ENCODE measurements at regions of chr1 and their contacts with region 1.

Region 1: GRCh38 chr1:182391362-182392044 is at the start of gene GLUL:
- DNase-seq: peak; percentile 86 to 99 (median 92)

Region 2: DNA sequence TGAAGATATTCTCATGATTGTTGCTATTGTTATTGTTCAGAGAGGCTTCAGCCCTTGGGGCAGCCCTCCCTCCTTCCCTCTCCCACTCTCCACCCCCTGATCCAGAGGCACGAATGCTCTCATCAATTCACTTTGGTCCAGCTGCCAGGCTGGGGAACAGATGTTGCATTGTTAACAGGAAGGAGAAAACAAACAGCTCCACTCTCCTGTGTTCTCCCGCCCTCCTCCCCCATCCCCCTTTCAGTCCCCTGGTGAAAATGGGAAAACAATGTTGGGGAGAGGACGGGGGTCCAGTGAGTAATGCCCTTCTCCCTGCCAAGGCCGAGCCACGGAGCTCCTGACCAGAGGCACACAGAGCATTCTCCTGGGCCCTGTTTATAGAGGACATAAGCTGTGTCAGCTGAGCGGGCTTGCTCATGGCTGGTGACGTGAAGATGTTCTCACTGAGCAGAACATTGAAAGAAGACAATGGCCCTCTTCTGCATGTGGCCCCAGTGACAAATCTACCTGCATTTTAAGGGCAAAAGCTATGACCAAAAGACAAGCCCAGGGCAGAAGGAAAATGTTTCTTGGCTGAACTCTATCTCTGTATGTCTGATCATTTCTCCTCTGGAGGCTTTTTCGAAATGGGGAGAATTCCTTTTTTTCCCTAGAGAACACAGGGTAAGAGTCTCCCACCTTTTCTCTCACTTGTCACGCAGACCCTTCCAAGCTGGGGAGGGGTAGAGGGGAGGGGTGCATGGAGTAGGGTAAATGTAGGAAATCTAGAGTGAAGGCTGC is 111.6 kb before region 1 on chr1:
- intact Hi-C with region 1: loop called (anchors 1 kb)
- DNase-seq: peak; percentile 52 to 98 (median 86)

Region 3: GRCh38 chr1:182301467-182302198 is 89.9 kb before region 1 on chr1:
- intact Hi-C with region 1: loop called (anchors 5 kb)
- DNase-seq: peak in 4 of 10 donors; percentile 25 to 86 (median 47)

Measured in posterior cingulate gyrus (tissue), 11 donors.